PC-9 (cell line): ENCODE measurements at regions of chr4 and their contacts with region 1.

Region 1: GRCh38 chr4:31089815-31090214 is 369.6 kb downstream of the PCDH7 start:
- DNase-seq: peak; percentile 77 to 97
- H3K4me3 ChIP-seq: peak overlapping the region; percentile 13; the same call in 1 of the 2 replicates
- H3K27ac ChIP-seq: peak overlapping the region; percentile 98
- H3K4me1 ChIP-seq: peaks cover 29% of the 10 kb centered on the region
- H3K27me3 ChIP-seq: no peaks in the 10 kb centered on the region
- CTCF ChIP-seq: no peak

Region 2: GRCh38 chr4:30757357-30757756 is 332.5 kb before region 1 on chr4:
- CTCF ChIA-PET with region 1: no interaction called
- POLR2A ChIA-PET with region 1: interaction called, 3 read pairs
- intact Hi-C with region 1: loop called (anchors 10 kb)
- DNase-seq: peak; percentile 52 to 89
- H3K4me3 ChIP-seq: peak overlapping the region; percentile 4; the same call in 1 of the 2 replicates
- H3K27ac ChIP-seq: peak overlapping the region; percentile 83
- H3K4me1 ChIP-seq: peaks cover 44% of the 10 kb centered on the region
- H3K27me3 ChIP-seq: no peaks in the 10 kb centered on the region
- CTCF ChIP-seq: no peak

Region 3: DNA sequence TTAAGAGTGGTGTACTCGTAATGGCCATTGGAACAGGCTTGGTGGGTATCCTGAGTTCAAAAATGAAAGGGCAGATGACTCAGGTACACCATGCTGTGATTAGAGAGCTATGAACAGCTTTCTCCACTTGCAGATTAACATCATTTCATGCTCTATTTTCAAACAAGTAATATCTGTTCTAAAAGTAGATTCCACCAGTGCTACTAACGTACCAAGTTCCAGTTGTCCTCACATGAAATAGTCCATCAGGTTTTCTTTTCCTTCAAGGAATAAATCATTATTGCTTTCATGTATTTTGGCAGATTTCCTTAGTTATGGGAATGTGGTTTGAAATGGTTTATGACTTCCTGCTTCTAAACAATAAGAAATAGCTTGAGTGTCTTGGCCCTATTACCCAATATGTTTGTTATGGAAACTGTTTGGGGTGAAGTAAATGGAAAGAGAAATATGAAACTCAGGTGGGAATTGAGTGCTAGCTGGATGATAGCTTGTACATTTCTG is 319.7 kb before region 1 on chr4:
- CTCF ChIA-PET with region 1: no interaction called
- POLR2A ChIA-PET with region 1: interaction called, 7 read pairs
- intact Hi-C with region 1: loop called (anchors 2 kb)
- DNase-seq: peak; percentile 30 to 95
- H3K4me3 ChIP-seq: peak overlapping the region; percentile 34; the same call in 1 of the 2 replicates
- H3K27ac ChIP-seq: peak overlapping the region; percentile 86
- H3K4me1 ChIP-seq: peaks cover 36% of the 10 kb centered on the region
- H3K27me3 ChIP-seq: no peaks in the 10 kb centered on the region
- CTCF ChIP-seq: no peak

Region 4: DNA sequence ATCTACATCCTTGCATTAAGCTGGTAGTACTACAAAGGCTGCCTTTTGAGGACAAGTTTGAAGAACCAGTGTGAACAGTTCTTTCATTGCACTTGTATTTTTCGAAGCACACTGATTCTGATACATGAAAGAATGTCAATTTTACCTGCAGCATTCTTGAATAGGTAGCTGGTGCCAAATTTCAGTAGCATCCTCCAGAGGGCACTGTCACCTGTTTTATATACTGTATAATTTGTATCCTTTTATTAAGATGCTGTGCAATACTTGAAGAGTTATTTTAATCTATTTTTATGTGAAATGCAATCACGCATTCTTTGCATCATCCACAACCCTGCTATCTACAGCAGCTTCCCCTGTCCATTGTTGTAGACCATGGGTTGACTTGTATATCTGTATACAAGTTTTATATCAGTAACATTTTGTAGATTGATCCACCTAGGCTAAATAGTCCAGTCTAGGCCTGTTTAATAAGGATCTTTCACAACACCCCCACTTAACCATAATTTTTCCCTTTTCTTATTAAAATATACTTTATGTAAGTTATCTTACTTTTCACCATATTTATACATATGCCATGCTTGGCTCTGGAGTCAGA is 44.0 kb before region 1 on chr4:
- CTCF ChIA-PET with region 1: no interaction called
- POLR2A ChIA-PET with region 1: no interaction called
- intact Hi-C with region 1: loop called (anchors 2 kb)
- DNase-seq: peak; percentile 31 to 57
- H3K4me3 ChIP-seq: no peak overlapping the region
- H3K27ac ChIP-seq: no peak overlapping the region
- H3K4me1 ChIP-seq: peaks cover 16% of the 10 kb centered on the region
- H3K27me3 ChIP-seq: no peaks in the 10 kb centered on the region
- CTCF ChIP-seq: peak; percentile 74

Region 5: GRCh38 chr4:31107362-31107761 is 17.5 kb after region 1 on chr4:
- CTCF ChIA-PET with region 1: no interaction called
- POLR2A ChIA-PET with region 1: interaction called, 14 read pairs
- intact Hi-C with region 1: no loop called
- DNase-seq: no peak
- H3K4me3 ChIP-seq: no peak overlapping the region
- H3K27ac ChIP-seq: no peak overlapping the region
- H3K4me1 ChIP-seq: no peaks in the 10 kb centered on the region
- H3K27me3 ChIP-seq: no peaks in the 10 kb centered on the region
- CTCF ChIP-seq: no peak